PC-3 (cell line): ENCODE measurements at regions of chr3 and their contacts with region 1.

Region 1: GRCh38 chr3:99172736-99173657 is 271.5 kb upstream of the DCBLD2 start:
- DNase-seq: peak; percentile 84
- ATAC-seq: peak; percentile 79
- H3K4me3 ChIP-seq: no peak overlapping the region
- H3K27ac ChIP-seq: no peak overlapping the region
- H3K4me1 ChIP-seq: no peaks in the 10 kb centered on the region
- H3K27me3 ChIP-seq: no peaks in the 10 kb centered on the region
- CTCF ChIP-seq: peak; percentile 94

Region 2: GRCh38 chr3:98817547-98818041 is 355.4 kb before region 1 on chr3:
- CTCF ChIA-PET with region 1: no interaction called
- POLR2A ChIA-PET with region 1: no interaction called
- intact Hi-C with region 1: loop called (anchors 10 kb)
- DNase-seq: peak; percentile 89
- ATAC-seq: peak; percentile 42
- H3K4me3 ChIP-seq: no peak overlapping the region
- H3K27ac ChIP-seq: peak overlapping the region; percentile 21
- H3K4me1 ChIP-seq: peaks cover 31% of the 10 kb centered on the region
- H3K27me3 ChIP-seq: no peaks in the 10 kb centered on the region
- CTCF ChIP-seq: peak; percentile 84

Region 3: DNA sequence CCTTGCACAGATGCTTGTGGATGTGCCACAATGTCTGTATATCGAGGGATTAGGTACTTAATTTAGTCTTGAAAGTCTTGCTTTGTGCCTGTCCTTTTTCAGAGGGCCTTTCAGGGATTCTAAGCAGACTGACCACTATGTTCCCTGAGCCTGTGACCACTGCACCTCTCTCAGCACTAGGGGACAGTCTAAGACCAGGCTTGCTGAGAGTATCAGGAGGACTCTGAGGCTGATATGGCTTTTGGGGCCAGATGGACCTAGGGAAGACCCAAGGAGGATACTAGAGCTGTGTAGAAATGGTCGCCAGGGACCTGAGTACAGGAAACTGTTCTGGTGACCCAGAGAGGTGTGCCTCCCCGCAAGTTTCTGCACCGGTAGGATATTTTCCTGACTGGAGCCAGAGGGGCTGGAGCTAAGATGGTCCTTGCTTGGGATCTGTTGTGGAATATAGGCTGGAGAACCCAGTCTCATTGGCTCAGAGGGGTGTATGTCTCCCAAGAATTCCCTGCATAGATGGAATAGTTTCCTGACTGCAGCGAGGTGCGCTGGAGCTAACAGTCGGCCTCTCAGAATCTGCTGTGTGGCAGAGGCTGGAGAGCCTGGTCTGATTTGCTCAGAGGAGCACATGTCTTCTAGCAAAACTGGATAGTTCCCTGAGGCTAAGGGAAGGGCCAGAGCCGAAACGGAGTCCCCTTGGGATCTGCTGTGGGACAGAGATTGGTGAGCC is 58.3 kb before region 1 on chr3:
- CTCF ChIA-PET with region 1: no interaction called
- POLR2A ChIA-PET with region 1: no interaction called
- intact Hi-C with region 1: loop called (anchors 1 kb)
- DNase-seq: peak; percentile 72
- ATAC-seq: peak; percentile 90
- H3K4me3 ChIP-seq: no peak overlapping the region
- H3K27ac ChIP-seq: no peak overlapping the region
- H3K4me1 ChIP-seq: peaks cover 6% of the 10 kb centered on the region; the same call in 1 of the 2 replicates
- H3K27me3 ChIP-seq: no peaks in the 10 kb centered on the region
- CTCF ChIP-seq: peak; percentile 94

Region 4: DNA sequence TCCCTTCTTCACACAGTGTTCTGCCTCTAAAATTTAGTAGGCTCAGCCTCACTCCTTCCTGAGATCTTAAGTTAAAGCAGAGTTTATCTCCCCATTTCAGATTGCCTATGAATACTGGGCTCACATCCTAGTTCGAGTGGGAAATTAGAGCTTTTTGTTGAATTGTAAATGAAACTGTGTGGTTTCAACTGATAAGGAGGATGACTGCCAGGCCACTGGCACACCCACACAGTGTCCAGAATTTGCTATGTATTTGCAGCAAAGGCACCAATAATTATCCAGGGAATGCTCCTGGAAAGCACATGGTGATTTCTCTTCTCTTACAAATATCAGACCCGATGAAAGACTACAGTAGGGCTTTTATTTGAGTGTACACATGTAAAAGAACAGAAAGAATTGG is 157.3 kb after region 1 on chr3:
- CTCF ChIA-PET with region 1: no interaction called
- POLR2A ChIA-PET with region 1: no interaction called
- intact Hi-C with region 1: loop called (anchors 2 kb)
- DNase-seq: peak; percentile 31
- ATAC-seq: peak; percentile 23
- H3K4me3 ChIP-seq: no peak overlapping the region
- H3K27ac ChIP-seq: no peak overlapping the region
- H3K4me1 ChIP-seq: peaks cover 22% of the 10 kb centered on the region
- H3K27me3 ChIP-seq: no peaks in the 10 kb centered on the region
- CTCF ChIP-seq: no peak

Region 5: DNA sequence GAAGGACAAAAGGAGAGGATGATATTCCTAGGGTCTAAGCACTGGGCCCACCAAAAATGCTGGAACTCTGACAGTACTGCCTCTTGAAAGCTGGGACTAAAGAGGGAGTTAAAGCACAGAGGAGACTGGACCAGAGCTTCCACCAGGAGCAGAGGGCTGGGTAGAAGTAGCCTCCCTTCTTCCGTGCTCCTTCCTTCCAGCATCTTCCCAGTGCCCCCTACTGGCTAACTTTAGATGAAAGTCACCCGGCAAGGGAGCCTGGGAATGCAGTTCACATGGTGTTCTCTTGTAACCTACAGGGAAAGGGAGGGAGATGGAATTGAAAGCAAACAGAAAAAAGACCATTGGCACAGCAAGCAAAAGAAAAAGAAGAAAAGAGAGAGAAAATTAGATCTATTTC is 359.2 kb after region 1 on chr3:
- CTCF ChIA-PET with region 1: no interaction called
- POLR2A ChIA-PET with region 1: no interaction called
- intact Hi-C with region 1: loop called (anchors 1 kb)
- DNase-seq: peak; percentile 93
- ATAC-seq: peak; percentile 91
- H3K4me3 ChIP-seq: no peak overlapping the region
- H3K27ac ChIP-seq: no peak overlapping the region
- H3K4me1 ChIP-seq: peaks cover 11% of the 10 kb centered on the region
- H3K27me3 ChIP-seq: no peaks in the 10 kb centered on the region
- CTCF ChIP-seq: peak; percentile 95

Region 6: DNA sequence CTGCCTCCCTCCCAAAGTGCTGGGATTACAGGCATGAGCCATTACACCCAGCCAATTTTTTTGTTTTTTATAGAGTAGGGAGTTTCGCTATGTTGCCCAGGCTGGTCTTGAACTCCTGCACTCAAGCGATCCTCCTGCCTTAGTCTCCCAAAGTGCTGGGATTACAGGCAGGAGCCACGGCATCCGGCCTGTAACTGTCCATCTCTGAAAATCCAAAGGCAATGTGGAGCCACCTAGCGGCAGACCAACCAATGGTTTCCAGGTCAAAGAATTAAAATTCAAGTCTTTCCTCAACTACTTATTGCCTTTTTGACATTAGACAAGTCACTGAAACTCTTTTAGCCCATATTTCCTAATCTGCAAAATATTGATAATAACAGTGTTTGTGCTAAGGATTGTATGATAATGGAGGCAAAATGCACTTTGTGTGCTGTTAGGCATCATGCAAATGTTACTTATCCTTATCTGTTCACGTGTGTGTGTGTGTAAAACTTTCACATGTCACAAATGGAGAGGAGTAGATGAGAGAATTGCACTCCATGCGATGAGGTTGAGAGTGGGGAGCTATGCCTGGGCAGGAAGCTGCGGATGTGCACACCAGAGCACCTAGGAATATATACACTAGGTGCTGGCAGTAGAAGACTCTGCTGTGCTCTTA is 514.1 kb after region 1 on chr3:
- CTCF ChIA-PET with region 1: no interaction called
- POLR2A ChIA-PET with region 1: no interaction called
- intact Hi-C with region 1: loop called (anchors 5 kb)
- DNase-seq: peak; percentile 82
- ATAC-seq: peak; percentile 82
- H3K4me3 ChIP-seq: no peak overlapping the region
- H3K27ac ChIP-seq: no peak overlapping the region
- H3K4me1 ChIP-seq: no peaks in the 10 kb centered on the region
- H3K27me3 ChIP-seq: no peaks in the 10 kb centered on the region
- CTCF ChIP-seq: peak; percentile 89